GM12878 (cell line): ENCODE measurements at regions of chr1 and their contacts with region 1.

Region 1: GRCh38 chr1:93304716-93305138 is 41.0 kb upstream of the DR1 start:
- DNase-seq: peak; percentile 12
- ATAC-seq: peak; percentile 82
- H3K4me3 ChIP-seq: no peak overlapping the region
- H3K27ac ChIP-seq: no peak overlapping the region
- H3K4me1 ChIP-seq: no peaks in the 10 kb centered on the region
- H3K27me3 ChIP-seq: no peaks in the 10 kb centered on the region
- CTCF ChIP-seq: peak; percentile 72 to 89 (median 88)
- EP300 ChIP-seq: no peak
- POLR2A ChIP-seq: no peak
- RAD21 ChIP-seq: peak; percentile 92

Region 2: GRCh38 chr1:93124556-93125355 is 180.0 kb before region 1 on chr1:
- CTCF ChIA-PET with region 1: no interaction called
- POLR2A ChIA-PET with region 1: no interaction called
- RAD21 ChIA-PET with region 1: no interaction called
- SMC1A ChIA-PET with region 1: no interaction called
- in situ Hi-C with region 1: no loop called
- intact Hi-C with region 1: no loop called
- DNase-seq: no peak
- ATAC-seq: no peak
- H3K4me3 ChIP-seq: no peak overlapping the region
- H3K27ac ChIP-seq: no peak overlapping the region
- H3K4me1 ChIP-seq: no peaks in the 10 kb centered on the region
- H3K27me3 ChIP-seq: no peaks in the 10 kb centered on the region
- CTCF ChIP-seq: no peak
- EP300 ChIP-seq: no peak
- POLR2A ChIP-seq: no peak
- RAD21 ChIP-seq: no peak

Region 3: GRCh38 chr1:93235271-93235670 is 69.5 kb before region 1 on chr1:
- CTCF ChIA-PET with region 1: no interaction called
- POLR2A ChIA-PET with region 1: no interaction called
- RAD21 ChIA-PET with region 1: no interaction called
- SMC1A ChIA-PET with region 1: no interaction called
- in situ Hi-C with region 1: no loop called
- intact Hi-C with region 1: no loop called
- DNase-seq: no peak
- ATAC-seq: no peak
- H3K4me3 ChIP-seq: no peak overlapping the region
- H3K27ac ChIP-seq: no peak overlapping the region
- H3K4me1 ChIP-seq: no peaks in the 10 kb centered on the region
- H3K27me3 ChIP-seq: no peaks in the 10 kb centered on the region
- CTCF ChIP-seq: no peak
- EP300 ChIP-seq: no peak
- POLR2A ChIP-seq: no peak
- RAD21 ChIP-seq: no peak

Region 4: GRCh38 chr1:93283496-93283895 is 21.2 kb before region 1 on chr1:
- CTCF ChIA-PET with region 1: interaction called, 10 read pairs
- POLR2A ChIA-PET with region 1: no interaction called
- RAD21 ChIA-PET with region 1: no interaction called
- SMC1A ChIA-PET with region 1: interaction called, 4 read pairs
- in situ Hi-C with region 1: no loop called
- intact Hi-C with region 1: no loop called
- DNase-seq: no peak
- ATAC-seq: no peak
- H3K4me3 ChIP-seq: no peak overlapping the region
- H3K27ac ChIP-seq: no peak overlapping the region
- H3K4me1 ChIP-seq: no peaks in the 10 kb centered on the region
- H3K27me3 ChIP-seq: no peaks in the 10 kb centered on the region
- CTCF ChIP-seq: no peak
- EP300 ChIP-seq: no peak
- POLR2A ChIP-seq: no peak
- RAD21 ChIP-seq: no peak

Region 5: GRCh38 chr1:93324486-93325464 is 20.0 kb after region 1 on chr1:
- CTCF ChIA-PET with region 1: interaction called, 16 read pairs
- POLR2A ChIA-PET with region 1: interaction called, 5 read pairs
- RAD21 ChIA-PET with region 1: interaction called, 3 read pairs
- SMC1A ChIA-PET with region 1: interaction called, 4 read pairs
- in situ Hi-C with region 1: no loop called
- intact Hi-C with region 1: no loop called
- DNase-seq: no peak
- ATAC-seq: no peak
- H3K4me3 ChIP-seq: no peak overlapping the region
- H3K27ac ChIP-seq: no peak overlapping the region
- H3K4me1 ChIP-seq: peaks cover 9% of the 10 kb centered on the region; the same call in 1 of the 2 replicates
- H3K27me3 ChIP-seq: no peaks in the 10 kb centered on the region
- CTCF ChIP-seq: no peak
- EP300 ChIP-seq: no peak
- POLR2A ChIP-seq: no peak
- RAD21 ChIP-seq: no peak

Region 6: DNA sequence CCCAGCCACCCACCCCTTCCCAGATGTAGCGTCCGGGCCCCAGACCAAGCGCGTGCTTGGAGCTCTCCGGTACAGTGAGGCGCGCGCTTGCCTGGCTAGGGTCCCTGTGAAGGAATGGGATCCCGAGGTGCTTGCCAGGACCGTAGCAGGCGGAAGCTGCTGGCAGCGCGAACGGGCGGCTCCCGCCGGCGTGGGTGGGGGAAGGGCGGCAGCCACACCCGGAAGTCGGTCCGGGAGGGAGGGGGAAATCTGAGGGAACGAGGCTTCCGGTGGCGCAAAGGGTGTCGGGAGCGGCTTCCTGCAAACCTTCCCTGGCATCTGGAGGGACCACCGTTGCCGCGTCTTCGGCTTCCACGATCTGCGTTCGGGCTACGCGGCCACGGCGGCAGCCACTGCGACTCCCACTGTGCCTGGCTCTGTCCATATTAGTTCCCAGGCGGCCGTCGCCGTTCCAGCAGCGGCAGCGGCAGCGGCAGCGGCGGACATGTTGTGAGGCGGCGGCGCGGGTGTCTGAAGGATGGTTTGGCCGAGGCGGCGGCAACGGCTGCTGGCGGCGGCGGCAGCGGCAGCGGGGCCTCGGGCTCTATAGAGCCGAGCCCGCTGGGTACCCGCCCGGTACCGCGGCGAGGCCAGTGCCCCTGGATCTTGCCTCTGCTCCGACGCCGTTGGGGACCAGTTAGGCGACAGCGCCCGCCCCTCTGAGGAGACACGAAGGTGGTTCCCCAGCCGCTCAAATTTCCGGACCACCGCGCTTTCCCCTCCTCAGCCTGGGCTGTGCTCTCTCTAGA is 41.1 kb after region 1 on chr1 and contains the start of gene DR1:
- CTCF ChIA-PET with region 1: interaction called, 15 read pairs
- POLR2A ChIA-PET with region 1: no interaction called
- RAD21 ChIA-PET with region 1: interaction called, 7 read pairs
- SMC1A ChIA-PET with region 1: interaction called, 9 read pairs
- in situ Hi-C with region 1: no loop called
- intact Hi-C with region 1: no loop called
- DNase-seq: peak; percentile 67
- ATAC-seq: peak; percentile 74
- H3K4me3 ChIP-seq: peak within 1 kb of the TSS; percentile 95
- H3K27ac ChIP-seq: peak within 1 kb of the TSS; percentile 99
- H3K4me1 ChIP-seq: peaks cover 4% of the 10 kb centered on the region; the same call in 1 of the 2 replicates
- H3K27me3 ChIP-seq: no peaks in the 10 kb centered on the region
- CTCF ChIP-seq: no peak
- EP300 ChIP-seq: 0 out of 4 replicates have a peak, but pooled peaks of 1 of the 2 experiments have one; percentile 19
- POLR2A ChIP-seq: peak; percentile 97
- RAD21 ChIP-seq: no peak
- polyA plus RNA-seq, gene DR1: 7.4 to 12.7 TPM

Region 7: GRCh38 chr1:93437976-93438605 is 133.4 kb after region 1 on chr1:
- CTCF ChIA-PET with region 1: interaction called, 10 read pairs
- POLR2A ChIA-PET with region 1: no interaction called
- RAD21 ChIA-PET with region 1: interaction called, 7 read pairs
- SMC1A ChIA-PET with region 1: interaction called, 12 read pairs
- in situ Hi-C with region 1: no loop called
- intact Hi-C with region 1: no loop called
- DNase-seq: no peak
- ATAC-seq: peak; percentile 74
- H3K4me3 ChIP-seq: no peak overlapping the region
- H3K27ac ChIP-seq: no peak overlapping the region
- H3K4me1 ChIP-seq: no peaks in the 10 kb centered on the region
- H3K27me3 ChIP-seq: peaks cover 0 to 2% of the 10 kb centered on the region in 2 experiments; a peak in 2 of 4 replicates
- CTCF ChIP-seq: peak; percentile 30 to 61 (median 46); a peak in 5 of 6 replicates
- EP300 ChIP-seq: no peak
- POLR2A ChIP-seq: no peak
- RAD21 ChIP-seq: peak; percentile 76